Naive thymus-derived CD4-positive, alpha-beta T cell (primary cell): ENCODE measurements at regions of chr12 and their contacts with region 1.

Region 1: DNA sequence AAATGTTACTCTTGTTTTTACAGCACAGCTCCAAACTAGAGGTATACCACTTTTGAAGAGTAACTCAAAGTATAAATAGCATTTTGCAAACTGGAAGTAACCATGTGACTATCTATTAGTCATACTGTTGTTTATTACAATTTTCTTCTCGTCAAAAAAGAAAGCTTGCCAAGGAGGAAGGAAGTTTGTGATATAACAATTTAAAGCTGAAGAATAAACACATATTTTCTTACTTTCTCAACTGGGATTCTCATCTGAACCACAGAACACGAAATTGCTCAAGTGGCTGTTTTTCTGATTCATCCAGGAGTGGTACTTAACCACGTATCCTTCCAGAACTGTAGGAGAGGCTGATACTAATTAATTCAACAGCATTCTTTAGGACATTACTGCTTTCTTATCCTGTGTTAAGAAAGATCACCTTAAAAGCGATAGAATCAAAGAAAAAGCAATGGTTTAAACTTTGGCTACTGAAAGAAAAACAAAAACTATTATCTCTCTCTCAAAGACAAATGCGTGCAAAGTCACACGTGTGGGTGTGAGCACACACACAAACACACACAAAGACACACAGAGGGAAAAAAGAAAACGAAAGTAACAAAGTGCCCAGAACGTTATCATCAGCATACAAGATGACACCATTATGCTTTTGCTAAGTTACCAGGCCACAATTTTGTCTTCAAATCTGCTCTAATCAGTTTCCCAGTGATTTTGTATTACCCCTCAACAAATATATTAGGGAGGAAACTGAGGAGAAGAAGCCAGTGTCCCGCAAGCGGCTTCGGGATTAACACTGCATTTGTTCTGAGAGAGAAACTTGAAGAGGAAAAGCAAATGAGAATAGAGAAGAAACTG is at the start of gene CLEC2B:
- DNase-seq: peak in 7 of 9 donors; percentile 54 to 71 (median 58)
- ATAC-seq: peak; percentile 83
- H3K4me3 ChIP-seq: peak within 1 kb of the TSS; percentile 68
- H3K4me3 Mint-ChIP-seq: peak within 1 kb of the TSS; percentile 87 to 99 (median 93)
- H3K27ac ChIP-seq: peak within 1 kb of the TSS; percentile 94
- H3K27ac Mint-ChIP-seq: peak within 1 kb of the TSS; percentile 97 to 100 (median 99)
- H3K4me1 ChIP-seq: peaks cover 7 to 14% of the 10 kb centered on the region in 2 donors
- H3K4me1 Mint-ChIP-seq: peaks cover 7 to 44% (median 29%) of the 10 kb centered on the region in 7 donors
- H3K27me3 ChIP-seq: no peaks in the 10 kb centered on the region
- H3K27me3 Mint-ChIP-seq: no peaks in the 10 kb centered on the region
- total RNA-seq, gene CLEC2B: 50.1 to 86.8 (median 73.8) TPM

Region 2: DNA sequence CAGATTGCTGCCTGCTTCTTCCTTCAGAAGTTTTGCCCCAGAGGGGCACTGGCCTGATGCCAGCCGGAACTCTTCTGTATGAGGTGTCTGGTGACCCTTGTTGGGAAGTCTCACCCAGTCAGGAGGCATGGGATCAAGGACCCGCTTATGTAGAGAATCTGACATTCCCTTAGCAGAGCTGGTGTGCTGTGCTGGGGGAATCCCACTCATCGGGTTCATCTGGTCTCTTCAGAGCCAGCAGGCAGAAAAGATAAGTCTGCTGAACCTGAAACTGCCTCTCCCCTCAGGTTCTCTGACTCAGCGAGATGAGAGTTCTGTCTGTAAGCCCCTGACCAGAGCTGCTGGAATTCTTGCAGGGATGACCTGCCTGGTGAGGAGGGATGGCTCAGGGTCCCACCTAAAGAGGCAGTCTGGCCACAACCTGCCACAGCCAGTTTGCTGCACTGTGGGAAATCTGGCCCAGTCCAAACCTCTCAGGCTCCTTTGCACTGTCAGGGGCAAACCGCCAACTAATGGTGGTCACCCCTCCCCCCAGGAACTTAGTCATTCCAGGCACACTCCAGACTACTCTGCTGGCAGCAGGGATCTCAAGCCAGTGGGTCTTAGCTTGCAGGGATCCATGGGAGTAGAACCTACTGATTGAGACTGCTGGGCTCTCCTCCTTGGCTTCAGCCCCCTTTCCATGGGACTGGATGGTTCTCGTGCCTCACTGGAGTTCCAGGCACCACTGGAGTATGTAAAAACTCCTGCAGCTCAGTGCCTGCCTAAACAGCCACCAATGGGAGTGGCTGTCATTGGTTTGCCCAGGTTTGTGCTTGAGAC is 195.9 kb before region 1 on chr12:
- CTCF ChIA-PET with region 1: no interaction called
- POLR2A ChIA-PET with region 1: interaction called, 4 read pairs
- intact Hi-C with region 1: loop called in 1 of 2 experiments (anchors 1 kb)
- DNase-seq: peak in 7 of 9 donors; percentile 36 to 67 (median 45)
- ATAC-seq: peak; percentile 63
- H3K4me3 ChIP-seq: peak overlapping the region; percentile 80
- H3K4me3 Mint-ChIP-seq: peak overlapping the region; percentile 89 to 99 (median 92)
- H3K27ac ChIP-seq: peak overlapping the region; percentile 83
- H3K27ac Mint-ChIP-seq: peak overlapping the region; percentile 90 to 99 (median 95)
- H3K4me1 ChIP-seq: peaks cover 30 to 38% of the 10 kb centered on the region in 2 donors
- H3K4me1 Mint-ChIP-seq: peaks cover 42 to 80% (median 69%) of the 10 kb centered on the region in 7 donors
- H3K27me3 ChIP-seq: no peaks in the 10 kb centered on the region
- H3K27me3 Mint-ChIP-seq: peaks cover 0 to 8% (median 0%) of the 10 kb centered on the region in 5 donors

Region 3: GRCh38 chr12:9760699-9761418 is 108.7 kb before region 1 on chr12 and contains the start of gene CD69:
- CTCF ChIA-PET with region 1: interaction called, 4 read pairs
- POLR2A ChIA-PET with region 1: interaction called, 88 read pairs
- intact Hi-C with region 1: loop called in 1 of 2 experiments (anchors 1 kb)
- DNase-seq: peak; percentile 50 to 92 (median 85)
- ATAC-seq: peak; percentile 75
- H3K4me3 ChIP-seq: peak within 1 kb of the TSS; percentile 70
- H3K4me3 Mint-ChIP-seq: peak within 1 kb of the TSS; percentile 87 to 99 (median 97)
- H3K27ac ChIP-seq: peak within 1 kb of the TSS; percentile 98
- H3K27ac Mint-ChIP-seq: peak within 1 kb of the TSS; percentile 97 to 100 (median 100)
- H3K4me1 ChIP-seq: peaks cover 34 to 51% of the 10 kb centered on the region in 2 donors
- H3K4me1 Mint-ChIP-seq: peaks cover 31 to 65% (median 55%) of the 10 kb centered on the region in 7 donors
- H3K27me3 ChIP-seq: no peaks in the 10 kb centered on the region
- H3K27me3 Mint-ChIP-seq: no peaks in the 10 kb centered on the region
- total RNA-seq, gene CD69: 25.8 to 588 (median 125) TPM

Region 4: GRCh38 chr12:9858135-9858534 is 11.4 kb before region 1 on chr12:
- CTCF ChIA-PET with region 1: interaction called, 3 read pairs
- POLR2A ChIA-PET with region 1: interaction called, 5 read pairs
- intact Hi-C with region 1: loop called in 1 of 2 experiments (anchors 1 kb)
- DNase-seq: no peak
- ATAC-seq: no peak
- H3K4me3 ChIP-seq: no peak overlapping the region
- H3K4me3 Mint-ChIP-seq: no peak overlapping the region
- H3K27ac ChIP-seq: no peak overlapping the region
- H3K27ac Mint-ChIP-seq: peak overlapping the region in 1 of 9 donors; percentile 22
- H3K4me1 ChIP-seq: peaks cover 13 to 19% of the 10 kb centered on the region in 2 donors
- H3K4me1 Mint-ChIP-seq: peaks cover 29 to 91% (median 72%) of the 10 kb centered on the region in 7 donors
- H3K27me3 ChIP-seq: no peaks in the 10 kb centered on the region
- H3K27me3 Mint-ChIP-seq: no peaks in the 10 kb centered on the region

Region 5: DNA sequence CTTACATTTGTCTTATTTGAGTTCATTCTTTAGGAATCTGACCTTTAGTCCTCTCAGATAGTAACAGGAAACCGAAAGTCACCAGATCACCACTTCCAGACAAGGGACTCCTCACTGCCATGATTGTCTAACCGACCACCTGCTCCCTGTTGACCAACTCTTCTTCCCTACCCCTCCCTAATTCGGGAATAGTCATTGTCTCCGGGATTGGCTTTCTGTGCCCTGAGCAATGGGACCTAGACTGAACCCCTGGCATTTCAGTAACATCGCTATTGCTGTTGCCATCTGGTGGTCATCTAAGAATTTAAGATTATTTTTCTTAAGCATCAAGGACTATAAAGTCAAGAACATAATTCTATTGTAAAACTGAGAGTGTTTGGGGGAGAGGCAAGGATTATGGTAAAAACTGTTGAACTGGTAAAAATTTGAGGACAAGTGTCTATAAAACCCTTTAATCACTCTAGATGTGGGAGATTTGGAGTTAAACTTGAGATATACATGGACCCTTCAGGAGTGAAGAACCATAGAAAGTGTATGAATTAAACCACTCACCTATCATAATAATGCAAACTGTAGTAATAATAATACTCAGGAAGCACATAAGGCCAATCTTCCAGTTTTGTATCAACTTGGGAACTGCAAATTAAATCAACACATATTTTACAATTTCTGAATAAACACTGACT is 56.3 kb after region 1 on chr12:
- CTCF ChIA-PET with region 1: interaction called, 4 read pairs
- POLR2A ChIA-PET with region 1: interaction called, 5 read pairs
- intact Hi-C with region 1: loop called (anchors 1 to 2 kb)
- DNase-seq: peak in 8 of 9 donors; percentile 7 to 64 (median 50)
- ATAC-seq: peak; percentile 73
- H3K4me3 ChIP-seq: no peak overlapping the region
- H3K4me3 Mint-ChIP-seq: peak overlapping the region; percentile 30 to 85 (median 73)
- H3K27ac ChIP-seq: no peak overlapping the region
- H3K27ac Mint-ChIP-seq: peak overlapping the region in 6 of 9 donors; percentile 5 to 93 (median 44)
- H3K4me1 ChIP-seq: peaks cover 0 to 6% of the 10 kb centered on the region in 2 donors
- H3K4me1 Mint-ChIP-seq: peaks cover 0 to 26% (median 18%) of the 10 kb centered on the region in 7 donors
- H3K27me3 ChIP-seq: no peaks in the 10 kb centered on the region
- H3K27me3 Mint-ChIP-seq: peaks cover 0 to 23% (median 0%) of the 10 kb centered on the region in 5 donors

Region 6: GRCh38 chr12:10613349-10614055 is 744.0 kb after region 1 on chr12 and contains the start of gene MAGOHB:
- CTCF ChIA-PET with region 1: no interaction called
- POLR2A ChIA-PET with region 1: no interaction called
- intact Hi-C with region 1: loop called in 1 of 2 experiments (anchors 5 kb)
- DNase-seq: peak; percentile 94 to 100 (median 97)
- ATAC-seq: peak; percentile 96
- H3K4me3 ChIP-seq: peak within 1 kb of the TSS; percentile 74
- H3K4me3 Mint-ChIP-seq: peak within 1 kb of the TSS; percentile 93 to 100 (median 98)
- H3K27ac ChIP-seq: peak within 1 kb of the TSS; percentile 93
- H3K27ac Mint-ChIP-seq: peak within 1 kb of the TSS; percentile 97 to 100 (median 100)
- H3K4me1 ChIP-seq: peaks cover 4 to 11% of the 10 kb centered on the region in 2 donors
- H3K4me1 Mint-ChIP-seq: peaks cover 12 to 38% (median 33%) of the 10 kb centered on the region in 7 donors
- H3K27me3 ChIP-seq: no peaks in the 10 kb centered on the region
- H3K27me3 Mint-ChIP-seq: peaks cover 0 to 26% (median 7%) of the 10 kb centered on the region in 5 donors
- total RNA-seq, gene MAGOHB: 12.1 to 43.1 (median 24.8) TPM

Region 7: GRCh38 chr12:10838461-10838860 is 968.9 kb after region 1 on chr12:
- CTCF ChIA-PET with region 1: no interaction called
- POLR2A ChIA-PET with region 1: no interaction called
- intact Hi-C with region 1: no loop called
- DNase-seq: no peak
- ATAC-seq: no peak
- H3K4me3 ChIP-seq: no peak overlapping the region
- H3K4me3 Mint-ChIP-seq: no peak overlapping the region
- H3K27ac ChIP-seq: no peak overlapping the region
- H3K27ac Mint-ChIP-seq: no peak overlapping the region
- H3K4me1 ChIP-seq: no peaks in the 10 kb centered on the region
- H3K4me1 Mint-ChIP-seq: no peaks in the 10 kb centered on the region
- H3K27me3 ChIP-seq: no peaks in the 10 kb centered on the region
- H3K27me3 Mint-ChIP-seq: no peaks in the 10 kb centered on the region